AG04449 (cell line): ENCODE measurements at regions of chr1 and their contacts with region 1.

Region 1: DNA sequence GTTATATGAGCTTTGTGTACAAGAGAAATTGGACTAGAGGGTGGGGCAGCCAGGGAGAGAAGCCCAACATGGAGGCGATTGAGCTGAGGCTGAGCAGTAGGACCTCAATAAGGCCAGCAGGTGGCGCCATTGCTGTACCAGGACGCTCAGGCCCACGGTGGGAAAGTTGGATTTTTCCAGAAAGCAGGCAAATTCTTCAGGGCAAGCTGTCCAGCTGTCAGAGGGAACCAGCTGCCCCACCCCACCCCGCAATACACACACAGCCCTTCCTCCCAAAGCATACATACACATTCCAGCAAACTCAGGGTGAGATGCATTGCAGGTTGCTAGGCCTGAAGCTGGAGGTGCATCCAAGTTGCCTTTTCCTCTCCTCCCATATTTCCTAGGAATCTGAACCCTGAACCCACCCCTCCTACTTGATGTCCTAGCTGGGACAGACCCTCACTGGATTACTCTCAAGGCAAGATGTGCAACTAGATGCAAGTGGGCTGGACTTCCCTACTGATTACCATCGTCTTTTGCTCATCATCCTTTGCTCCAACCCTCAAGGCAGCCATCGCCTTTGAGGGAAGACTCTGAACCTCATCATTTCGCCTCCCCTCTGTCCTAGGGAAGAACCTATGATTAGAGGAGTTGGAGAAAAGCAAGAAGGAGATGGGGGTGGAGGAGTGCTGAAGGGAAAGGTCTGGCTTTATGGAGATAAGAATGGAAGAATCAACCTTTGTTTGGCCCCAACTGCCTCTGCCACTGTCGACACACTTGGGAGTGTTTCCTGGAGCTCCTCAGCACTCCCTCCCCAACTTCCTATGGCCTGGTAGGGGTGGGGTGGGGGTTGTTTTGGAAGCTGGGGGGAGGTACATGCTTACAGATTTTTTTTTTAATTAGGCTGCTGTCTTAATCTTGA is 25.5 kb downstream of the CD34 start:
- DNase-seq: peak; percentile 37
- H3K4me3 ChIP-seq: no peak overlapping the region
- CTCF ChIP-seq: peak; percentile 92

Region 2: DNA sequence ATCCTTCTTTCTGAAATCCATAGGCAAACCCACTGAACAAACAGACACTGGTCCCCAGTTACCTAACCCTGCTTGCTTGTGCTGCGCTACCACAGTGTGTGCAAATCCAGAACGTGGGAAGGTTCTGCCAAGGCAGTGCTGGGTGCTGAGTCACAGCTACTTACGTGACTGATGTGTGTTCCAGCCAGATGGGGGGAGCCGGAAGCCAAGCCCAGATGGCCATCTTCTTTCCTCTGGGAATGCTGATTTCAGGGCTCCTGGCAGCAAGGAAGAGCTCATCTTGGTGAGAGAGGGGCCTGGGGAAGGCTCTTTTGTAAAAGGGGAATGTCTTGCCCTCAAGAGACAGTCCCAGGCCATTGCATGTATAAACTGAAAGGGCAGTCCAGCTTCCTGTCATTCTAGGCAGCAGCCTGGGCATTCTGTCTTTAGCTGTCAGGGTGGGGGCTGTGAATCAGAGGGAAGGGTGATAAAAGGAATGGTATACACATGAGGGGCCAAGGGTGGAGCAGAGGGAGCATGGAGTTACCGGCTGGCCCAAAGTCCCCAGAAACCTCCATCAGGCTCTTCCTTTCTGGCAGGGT is 79.5 kb before region 1 on chr1:
- CTCF ChIA-PET with region 1: no interaction called
- POLR2A ChIA-PET with region 1: no interaction called
- DNase-seq: peak; percentile 90
- H3K4me3 ChIP-seq: no peak overlapping the region
- CTCF ChIP-seq: no peak

Region 3: DNA sequence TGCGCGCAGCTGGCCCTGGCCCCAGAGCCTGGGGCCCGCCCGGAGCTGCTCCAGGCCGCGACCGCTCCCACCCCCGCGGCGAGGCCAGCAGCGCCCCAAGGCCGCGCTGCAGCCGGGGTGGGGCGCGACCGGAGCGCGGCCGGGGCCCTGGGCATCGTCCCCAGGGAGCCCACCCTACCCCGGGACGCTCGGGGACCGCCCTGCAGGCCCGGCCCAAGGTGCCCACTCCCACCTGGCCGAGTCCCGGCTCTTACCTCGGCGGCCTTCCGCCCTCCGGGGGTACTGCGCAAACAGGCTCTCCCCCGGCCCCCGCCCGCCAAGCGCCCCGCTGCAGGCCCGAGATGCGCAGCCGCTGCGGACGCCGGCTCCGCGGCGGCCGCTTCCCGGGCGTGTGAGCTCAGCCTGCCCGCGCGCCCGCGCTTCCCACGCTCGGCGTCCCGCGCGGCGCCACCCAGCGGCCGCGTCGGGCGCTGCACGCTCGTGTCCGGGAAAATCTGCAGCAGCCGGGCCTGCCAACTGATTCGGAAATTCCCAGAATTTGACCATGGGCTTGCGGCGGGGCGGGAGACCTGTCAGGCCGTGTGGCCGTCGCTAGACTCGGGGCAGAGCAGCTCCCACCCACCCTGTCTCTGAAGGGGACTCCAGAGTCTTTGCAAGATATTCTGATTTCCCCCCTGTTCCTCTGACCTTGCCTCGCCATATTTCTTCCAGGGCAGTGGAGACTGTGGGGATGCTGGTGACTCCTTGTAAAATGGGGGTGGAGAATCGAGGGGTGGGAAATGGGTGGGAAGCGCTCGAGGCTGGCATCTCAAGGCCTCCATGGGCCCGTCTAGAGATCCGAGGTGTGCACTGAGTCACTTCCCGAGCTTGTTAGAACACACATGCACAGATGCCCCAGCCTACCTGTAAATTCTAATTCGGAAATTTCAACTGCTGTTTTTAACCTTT is 16.3 kb before region 1 on chr1:
- CTCF ChIA-PET with region 1: interaction called, 285 read pairs
- POLR2A ChIA-PET with region 1: no interaction called
- DNase-seq: no peak
- H3K4me3 ChIP-seq: peak overlapping the region; percentile 67
- CTCF ChIP-seq: peak; percentile 76

Region 4: DNA sequence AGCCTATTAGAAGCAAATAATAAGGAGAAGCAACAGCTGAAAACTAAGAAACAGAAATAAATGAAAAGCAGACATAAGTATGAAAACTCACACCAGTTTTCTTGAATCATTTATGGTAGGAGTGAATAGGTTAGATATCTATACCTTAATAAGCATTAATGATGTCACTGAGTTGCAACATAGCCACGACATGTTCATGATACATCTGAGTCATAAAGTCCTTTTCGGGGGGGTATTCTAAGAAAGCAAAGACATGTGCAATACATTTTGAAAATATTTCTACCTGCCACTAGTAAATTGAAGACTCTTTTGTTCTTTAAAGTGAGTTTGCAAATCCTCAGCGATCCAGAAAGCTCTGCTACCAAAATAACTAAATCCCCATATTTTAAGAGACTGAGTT is 18.4 kb after region 1 on chr1:
- CTCF ChIA-PET with region 1: interaction called, 104 read pairs
- POLR2A ChIA-PET with region 1: no interaction called
- DNase-seq: no peak
- H3K4me3 ChIP-seq: no peak overlapping the region
- CTCF ChIP-seq: no peak

Region 5: DNA sequence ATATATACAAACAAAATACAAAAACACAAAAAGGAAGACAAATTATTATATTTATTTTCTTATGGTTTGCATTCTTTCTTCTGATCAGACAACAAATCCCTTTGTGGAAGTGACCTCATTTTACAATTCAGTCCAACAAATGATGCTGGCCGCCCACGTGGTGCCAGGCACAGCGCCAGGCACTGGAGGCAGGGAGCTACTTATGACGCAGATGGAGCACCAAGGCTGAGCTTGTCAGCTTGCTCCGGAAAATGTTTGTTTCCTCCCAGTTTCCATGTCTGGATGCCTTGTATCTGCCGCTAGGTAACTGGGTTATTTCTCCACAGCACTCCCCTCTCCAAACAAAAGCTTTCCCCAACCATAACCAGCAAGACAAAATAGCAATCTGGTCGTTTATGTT is 56.3 kb after region 1 on chr1:
- CTCF ChIA-PET with region 1: interaction called, 12 read pairs
- POLR2A ChIA-PET with region 1: no interaction called
- DNase-seq: no peak
- H3K4me3 ChIP-seq: no peak overlapping the region
- CTCF ChIP-seq: no peak

Region 6: GRCh38 chr1:207963427-207964194 is 78.2 kb after region 1 on chr1:
- CTCF ChIA-PET with region 1: interaction called, 429 read pairs
- POLR2A ChIA-PET with region 1: interaction called, 12 read pairs
- DNase-seq: no peak
- H3K4me3 ChIP-seq: peak overlapping the region; percentile 61
- CTCF ChIP-seq: peak; percentile 96

Region 7: GRCh38 chr1:208093754-208094719 is 208.7 kb after region 1 on chr1:
- CTCF ChIA-PET with region 1: interaction called, 11 read pairs
- POLR2A ChIA-PET with region 1: no interaction called
- DNase-seq: no peak
- H3K4me3 ChIP-seq: no peak overlapping the region
- CTCF ChIP-seq: peak; percentile 77